ENCODE measurements at regions of chr9 and their contacts with region 1.

Region 1: GRCh38 chr9:2158111-2158610 is 143.0 kb downstream of the SMARCA2 start:
- DNase-seq: no peak
- H3K4me3 ChIP-seq: peak overlapping the region; percentile 44
- H3K27me3 ChIP-seq: no peaks in the 10 kb centered on the region
- CTCF ChIP-seq: no peak

Region 2: DNA sequence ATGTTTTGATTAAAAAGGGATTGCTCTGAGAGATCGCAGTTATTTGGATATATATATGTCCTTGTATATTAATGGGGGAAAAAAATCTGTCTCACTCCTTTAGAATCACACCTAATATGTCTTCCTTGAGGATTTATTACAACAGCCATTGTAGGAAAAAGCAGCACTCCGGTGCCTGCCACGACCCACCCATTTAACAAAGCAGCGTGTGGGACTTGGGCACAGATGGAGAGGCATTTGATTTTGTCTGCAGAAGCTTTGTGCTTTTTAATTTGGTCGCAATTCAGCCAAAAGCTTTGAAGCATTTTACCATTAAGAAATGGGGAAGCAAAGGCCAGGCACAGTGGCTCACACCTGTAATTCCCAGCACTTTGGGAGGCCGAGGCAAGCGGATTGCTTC is 16.1 kb after region 1 on chr9:
- CTCF ChIA-PET with region 1: no interaction called
- POLR2A ChIA-PET with region 1: no interaction called
- DNase-seq: no peak
- H3K4me3 ChIP-seq: no peak overlapping the region
- H3K27me3 ChIP-seq: no peaks in the 10 kb centered on the region
- CTCF ChIP-seq: no peak

Region 3: DNA sequence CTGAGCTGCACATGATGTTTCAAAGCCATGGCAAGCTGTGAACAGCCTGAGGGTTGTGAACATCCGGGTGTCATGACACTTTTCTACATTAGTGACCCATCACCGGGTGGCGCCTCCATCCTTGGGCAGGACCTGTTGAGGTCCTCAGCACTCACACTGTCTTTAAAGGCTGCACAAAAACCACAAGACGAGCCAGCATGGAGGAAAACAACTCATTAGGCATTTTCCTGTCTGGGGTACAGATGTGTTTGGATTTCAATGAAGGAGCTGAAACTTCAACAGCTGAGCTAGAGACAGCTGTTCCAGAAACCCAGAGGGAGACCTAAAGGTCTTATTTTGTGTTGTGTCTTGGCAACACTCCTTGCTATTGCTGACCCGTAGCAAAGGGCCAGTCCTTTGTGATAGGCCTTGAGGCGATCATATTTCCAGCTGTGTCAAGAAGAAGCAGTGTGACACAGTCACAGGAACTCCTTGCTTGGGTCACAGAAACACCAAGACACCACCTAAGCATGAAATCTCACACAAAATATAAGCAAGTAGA is 311.6 kb after region 1 on chr9:
- CTCF ChIA-PET with region 1: no interaction called
- POLR2A ChIA-PET with region 1: interaction called, 19 read pairs
- DNase-seq: no peak
- H3K4me3 ChIP-seq: no peak overlapping the region
- H3K27me3 ChIP-seq: no peaks in the 10 kb centered on the region
- CTCF ChIP-seq: no peak

Measured in BJ (cell line).